ENCODE measurements at regions of chr6 and their contacts with region 1.

Region 1: DNA sequence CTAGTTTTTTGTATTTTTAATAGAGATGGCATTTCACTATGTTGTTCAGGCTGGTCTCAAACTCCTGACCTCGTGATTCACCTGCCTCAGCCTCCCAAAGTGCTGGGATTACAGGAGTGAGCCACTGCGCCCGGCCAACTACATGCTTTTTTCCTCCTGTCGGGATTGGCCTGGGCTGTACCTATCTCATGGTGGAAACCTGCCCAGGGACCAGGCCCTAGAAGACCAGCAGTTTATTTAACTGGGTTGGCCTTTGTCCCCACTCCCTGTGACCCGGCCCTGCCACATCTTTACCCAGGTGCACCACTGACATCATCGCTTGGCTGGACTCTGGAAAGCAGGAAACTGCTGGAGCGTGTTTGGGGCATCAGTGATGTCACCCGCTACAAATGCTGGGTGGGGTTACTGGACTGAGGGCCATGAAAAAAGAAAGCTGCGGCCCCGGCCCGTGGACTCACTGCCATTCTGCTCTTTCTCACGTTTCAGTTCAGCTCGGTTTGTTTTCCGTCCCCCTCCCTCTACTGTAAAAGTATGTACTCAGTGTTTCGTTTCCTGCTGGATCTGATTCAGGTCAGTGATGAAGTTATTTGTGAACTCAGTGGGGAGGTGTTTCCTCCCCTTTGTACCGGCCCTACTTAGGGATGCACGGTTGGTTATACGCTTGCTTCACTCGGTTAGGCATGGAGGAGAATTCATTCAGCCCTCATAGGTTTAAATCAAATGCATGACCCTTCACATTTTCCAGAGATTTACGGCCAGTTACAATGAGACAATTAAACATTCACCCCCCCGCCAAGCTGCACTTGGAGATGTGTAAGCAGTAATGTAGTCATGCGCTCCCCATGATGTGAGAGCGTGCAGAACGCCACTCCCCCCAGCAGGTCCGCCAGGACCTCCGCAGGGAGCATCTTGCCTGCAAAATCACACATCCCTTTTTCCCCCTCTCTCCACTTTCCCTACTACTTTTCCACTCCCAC is 179.3 kb downstream of the MTHFD1L start:
- DNase-seq: peak; percentile 87 to 97
- H3K4me3 ChIP-seq: peak overlapping the region; percentile 32; the same call in 1 of the 2 replicates
- H3K27ac ChIP-seq: peak overlapping the region; percentile 95
- H3K4me1 ChIP-seq: peaks cover 67% of the 10 kb centered on the region
- H3K27me3 ChIP-seq: no peaks in the 10 kb centered on the region
- CTCF ChIP-seq: no peak

Region 2: GRCh38 chr6:150881911-150882481 is 162.8 kb before region 1 on chr6:
- CTCF ChIA-PET with region 1: interaction called, 10 read pairs
- POLR2A ChIA-PET with region 1: no interaction called
- intact Hi-C with region 1: no loop called
- DNase-seq: peak; percentile 41 to 79
- H3K4me3 ChIP-seq: no peak overlapping the region
- H3K27ac ChIP-seq: peak overlapping the region; percentile 47
- H3K4me1 ChIP-seq: peaks cover 18% of the 10 kb centered on the region
- H3K27me3 ChIP-seq: no peaks in the 10 kb centered on the region
- CTCF ChIP-seq: no peak

Region 3: GRCh38 chr6:151060096-151060765 is 15.5 kb after region 1 on chr6:
- CTCF ChIA-PET with region 1: no interaction called
- POLR2A ChIA-PET with region 1: no interaction called
- intact Hi-C with region 1: loop called (anchors 1 kb)
- DNase-seq: peak; percentile 34 to 99
- H3K4me3 ChIP-seq: peak overlapping the region; percentile 11; the same call in 1 of the 2 replicates
- H3K27ac ChIP-seq: peak overlapping the region; percentile 97
- H3K4me1 ChIP-seq: peaks cover 70% of the 10 kb centered on the region
- H3K27me3 ChIP-seq: no peaks in the 10 kb centered on the region
- CTCF ChIP-seq: no peak

Region 4: DNA sequence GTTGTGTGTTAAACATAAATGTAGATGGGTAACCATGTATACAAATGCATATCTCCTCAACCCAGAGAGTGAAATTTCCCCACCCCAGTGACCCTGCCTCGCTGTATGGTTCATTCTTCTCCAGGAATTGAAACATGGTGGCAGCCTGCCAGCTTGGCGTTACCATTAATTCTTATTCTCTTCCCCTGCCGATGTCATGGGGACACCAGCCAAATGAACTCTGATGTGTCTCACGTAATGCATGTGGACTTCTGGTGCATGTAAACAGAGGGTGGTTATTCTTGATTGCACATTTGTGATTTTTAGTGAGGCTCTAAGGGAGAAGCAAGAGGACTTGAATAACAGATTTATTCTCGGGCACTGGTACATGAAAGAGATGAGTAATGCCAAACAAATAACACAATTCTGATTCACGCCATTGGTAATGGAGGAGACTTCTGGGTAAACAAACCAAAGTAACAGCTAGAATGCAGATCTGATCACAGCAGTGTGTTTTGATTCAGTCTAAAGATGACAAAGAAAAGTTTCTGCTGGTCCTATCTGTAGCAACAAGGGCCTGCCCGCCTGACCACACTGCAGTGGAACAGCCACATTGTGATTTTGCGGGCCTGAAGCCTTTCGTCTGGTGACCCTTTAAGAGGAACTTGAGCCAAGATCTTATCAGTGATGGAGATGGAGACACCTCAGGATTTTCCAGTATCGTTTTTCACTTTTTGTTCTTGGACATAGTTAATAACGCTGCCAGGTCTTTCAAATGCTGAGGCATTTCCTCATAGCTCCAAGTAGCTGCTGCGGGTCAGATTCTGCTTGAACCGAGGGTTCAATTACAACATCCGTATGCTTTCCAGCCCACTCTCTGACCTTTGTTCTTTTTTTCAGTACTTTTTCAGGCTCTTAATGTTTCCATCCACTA is 23.2 kb after region 1 on chr6:
- CTCF ChIA-PET with region 1: no interaction called
- POLR2A ChIA-PET with region 1: no interaction called
- intact Hi-C with region 1: loop called (anchors 1 kb)
- DNase-seq: peak; percentile 72 to 99
- H3K4me3 ChIP-seq: peak overlapping the region; percentile 37; the same call in 1 of the 2 replicates
- H3K27ac ChIP-seq: peak overlapping the region; percentile 98
- H3K4me1 ChIP-seq: peaks cover 75% of the 10 kb centered on the region
- H3K27me3 ChIP-seq: no peaks in the 10 kb centered on the region
- CTCF ChIP-seq: no peak

Region 5: DNA sequence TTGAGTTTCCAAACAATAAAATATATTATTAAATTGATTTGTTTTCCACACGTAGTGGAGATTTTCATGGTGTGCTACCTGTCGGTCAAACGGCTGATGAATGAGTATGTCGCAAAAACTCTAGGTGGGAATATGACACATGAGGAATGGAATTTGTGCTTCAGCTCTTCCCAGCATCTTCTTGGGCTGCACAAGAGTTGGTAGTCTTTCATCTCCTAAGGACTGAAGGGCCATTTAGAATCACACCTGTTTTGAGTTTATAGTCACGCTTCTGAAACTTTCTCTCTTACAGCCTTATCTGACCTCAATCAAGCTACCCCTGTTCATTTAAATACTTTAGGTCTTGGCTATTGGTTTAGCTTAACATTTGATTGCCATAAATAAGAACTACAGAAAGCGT is 37.3 kb after region 1 on chr6:
- CTCF ChIA-PET with region 1: no interaction called
- POLR2A ChIA-PET with region 1: no interaction called
- intact Hi-C with region 1: loop called (anchors 1 kb)
- DNase-seq: peak; percentile 15 to 92
- H3K4me3 ChIP-seq: peak overlapping the region; percentile 40; the same call in 1 of the 2 replicates
- H3K27ac ChIP-seq: peak overlapping the region; percentile 93
- H3K4me1 ChIP-seq: peaks cover 33% of the 10 kb centered on the region
- H3K27me3 ChIP-seq: no peaks in the 10 kb centered on the region
- CTCF ChIP-seq: no peak; the same call in 1 of the 2 replicates

Region 6: GRCh38 chr6:151323791-151324487 is 279.2 kb after region 1 on chr6:
- CTCF ChIA-PET with region 1: interaction called, 3 read pairs
- POLR2A ChIA-PET with region 1: no interaction called
- intact Hi-C with region 1: loop called (anchors 10 kb)
- DNase-seq: peak; percentile 70 to 74
- H3K4me3 ChIP-seq: peak overlapping the region; percentile 68; the same call in 1 of the 2 replicates
- H3K27ac ChIP-seq: peak overlapping the region; percentile 48
- H3K4me1 ChIP-seq: peaks cover 39% of the 10 kb centered on the region
- H3K27me3 ChIP-seq: no peaks in the 10 kb centered on the region
- CTCF ChIP-seq: peak; percentile 96

Measured in PC-9 (cell line).